Dendritic cell treated with granulocyte-macrophage colony-stimulating factor and Interleukin-4, amounts not matched to agents 40 ng/mL and 50 ng/mL, for 4 days (primary cell): ENCODE measurements at regions of chr15 and their contacts with region 1.

Region 1: GRCh38 chr15:84588053-84588874 is 12.5 kb upstream of the ZSCAN2 start:
- H3K4me3 Mint-ChIP-seq: peak overlapping the region; percentile 66
- H3K27ac Mint-ChIP-seq: peak overlapping the region; percentile 55
- H3K4me1 Mint-ChIP-seq: peaks cover 9% of the 10 kb centered on the region
- H3K27me3 Mint-ChIP-seq: peaks cover 4% of the 10 kb centered on the region

Region 2: GRCh38 chr15:84633311-84634227 is 45.3 kb after region 1 on chr15:
- intact Hi-C with region 1: no loop called
- H3K4me3 Mint-ChIP-seq: peak overlapping the region; percentile 86
- H3K27ac Mint-ChIP-seq: peak overlapping the region; percentile 83
- H3K4me1 Mint-ChIP-seq: peaks cover 46% of the 10 kb centered on the region
- H3K27me3 Mint-ChIP-seq: no peaks in the 10 kb centered on the region

Region 3: GRCh38 chr15:84883433-84883832 is 295.2 kb after region 1 on chr15:
- intact Hi-C with region 1: loop called (anchors 1 kb)
- H3K4me3 Mint-ChIP-seq: no peak overlapping the region
- H3K27ac Mint-ChIP-seq: no peak overlapping the region
- H3K4me1 Mint-ChIP-seq: peaks cover 4% of the 10 kb centered on the region
- H3K27me3 Mint-ChIP-seq: no peaks in the 10 kb centered on the region

Region 4: GRCh38 chr15:84929744-84930371 is 341.6 kb after region 1 on chr15:
- intact Hi-C with region 1: loop called (anchors 5 kb)
- H3K4me3 Mint-ChIP-seq: no peak overlapping the region
- H3K27ac Mint-ChIP-seq: no peak overlapping the region
- H3K4me1 Mint-ChIP-seq: peaks cover 15% of the 10 kb centered on the region
- H3K27me3 Mint-ChIP-seq: no peaks in the 10 kb centered on the region